ENCODE measurements at regions of chr5 and their contacts with region 1.

Region 1: GRCh38 chr5:127290019-127290945 is at the start of gene MEGF10:
- DNase-seq: peak in 2 of 5 donors; percentile 21 to 45
- ATAC-seq: peak; percentile 37 to 85 (median 75)
- H3K4me3 ChIP-seq: peak within 1 kb of the TSS in 11 of 12 donors; percentile 16 to 47 (median 41)
- H3K27ac ChIP-seq: no peak within 1 kb of the TSS
- H3K4me1 ChIP-seq: peaks cover 0 to 12% (median 3%) of the 10 kb centered on the region in 12 donors
- H3K27me3 ChIP-seq: peaks cover 0 to 57% (median 33%) of the 10 kb centered on the region in 9 donors
- CTCF ChIP-seq: peak; percentile 36 to 68 (median 60)
- POLR2A ChIP-seq: no peak
- total RNA-seq, gene MEGF10: 0.09 to 1.3 (median 0.37) TPM

Region 2: GRCh38 chr5:127042593-127042992 is 247.7 kb before region 1 on chr5:
- intact Hi-C with region 1: no loop called
- DNase-seq: no peak
- ATAC-seq: no peak
- H3K4me3 ChIP-seq: no peak overlapping the region
- H3K27ac ChIP-seq: no peak overlapping the region
- H3K4me1 ChIP-seq: peaks cover 0 to 33% (median 22%) of the 10 kb centered on the region in 12 donors
- H3K27me3 ChIP-seq: no peaks in the 10 kb centered on the region
- CTCF ChIP-seq: peak in 9 of 12 donors; percentile 9 to 40 (median 27)
- POLR2A ChIP-seq: no peak

Region 3: DNA sequence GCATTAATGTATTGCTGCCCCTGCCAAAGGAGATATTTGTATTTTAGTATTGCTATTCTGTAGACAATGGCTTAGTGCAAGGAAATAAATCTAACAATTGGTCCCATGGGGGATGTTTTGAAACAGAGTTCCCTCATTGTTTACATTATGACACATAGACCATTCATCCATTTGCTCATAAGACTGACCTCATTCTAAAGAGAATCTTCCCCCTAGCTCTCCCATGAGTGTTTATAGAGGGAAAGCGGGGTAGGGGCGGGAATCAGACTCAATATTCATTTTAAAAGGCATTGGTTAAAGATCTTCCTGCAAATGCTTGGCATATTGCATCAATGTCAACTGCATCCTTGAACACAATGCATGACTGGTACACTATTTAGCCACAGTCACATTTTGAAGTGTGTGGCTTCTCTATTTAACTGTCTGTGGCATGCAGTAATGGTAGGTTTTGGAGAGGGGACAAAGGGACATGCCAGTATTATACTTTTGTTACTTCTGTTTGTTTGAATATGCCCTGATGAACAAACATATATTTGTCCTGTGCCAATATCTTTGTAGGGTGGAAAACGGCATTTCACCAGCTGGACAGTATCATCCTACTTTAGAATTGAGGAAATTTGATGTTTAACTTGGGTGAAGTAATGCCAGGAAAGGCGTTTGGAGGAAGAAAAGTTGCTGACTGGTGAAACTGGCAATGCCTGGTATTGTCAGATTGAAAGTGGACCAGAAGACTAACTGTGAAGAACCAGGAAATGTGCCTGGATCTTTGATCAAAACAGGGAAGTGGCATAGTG is 83.8 kb before region 1 on chr5:
- intact Hi-C with region 1: no loop called
- DNase-seq: no peak
- ATAC-seq: no peak
- H3K4me3 ChIP-seq: no peak overlapping the region
- H3K27ac ChIP-seq: no peak overlapping the region
- H3K4me1 ChIP-seq: no peaks in the 10 kb centered on the region
- H3K27me3 ChIP-seq: no peaks in the 10 kb centered on the region
- CTCF ChIP-seq: no peak
- POLR2A ChIP-seq: no peak

Region 4: GRCh38 chr5:127326428-127326827 is 36.1 kb after region 1 on chr5:
- intact Hi-C with region 1: no loop called
- DNase-seq: no peak
- ATAC-seq: no peak
- H3K4me3 ChIP-seq: no peak overlapping the region
- H3K27ac ChIP-seq: no peak overlapping the region
- H3K4me1 ChIP-seq: no peaks in the 10 kb centered on the region
- H3K27me3 ChIP-seq: no peaks in the 10 kb centered on the region
- CTCF ChIP-seq: no peak
- POLR2A ChIP-seq: no peak

Region 5: DNA sequence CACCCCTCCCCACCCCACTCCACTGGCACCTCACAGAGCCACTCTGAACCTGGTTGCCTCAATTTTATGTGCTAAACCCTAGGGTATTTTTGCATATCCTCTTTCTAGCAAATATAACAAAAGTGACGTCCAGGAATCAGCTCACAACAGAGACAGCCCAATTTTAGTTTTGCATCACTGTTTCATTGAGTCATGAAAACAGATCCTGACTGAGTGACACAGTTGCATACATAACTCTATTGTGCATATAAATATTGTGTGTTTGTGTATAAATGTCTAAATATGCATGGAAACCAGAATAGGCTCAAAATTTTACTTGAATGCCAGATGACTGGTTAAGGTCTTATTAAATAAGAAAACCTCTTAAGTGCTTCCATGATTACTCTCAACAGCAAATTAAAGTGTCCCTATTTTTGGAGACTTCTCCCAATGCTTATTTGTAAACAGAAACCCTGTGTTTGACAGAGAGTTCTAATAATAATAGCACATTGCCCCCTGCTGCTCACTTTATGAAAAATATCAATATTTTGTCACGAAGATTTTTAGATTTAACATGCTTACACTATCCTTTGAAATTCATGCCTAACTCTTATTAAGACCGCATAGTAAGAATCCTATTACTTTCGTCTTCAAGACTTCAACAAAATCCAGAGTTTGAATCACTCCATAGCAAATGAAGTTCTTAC is 151.7 kb after region 1 on chr5:
- intact Hi-C with region 1: loop called in 9 of 10 experiments (anchors 2 to 10 kb)
- DNase-seq: no peak
- ATAC-seq: no peak
- H3K4me3 ChIP-seq: no peak overlapping the region
- H3K27ac ChIP-seq: no peak overlapping the region
- H3K4me1 ChIP-seq: no peaks in the 10 kb centered on the region
- H3K27me3 ChIP-seq: peaks cover 0 to 5% (median 0%) of the 10 kb centered on the region in 9 donors
- CTCF ChIP-seq: peak in 8 of 12 donors; percentile 15 to 40 (median 32)
- POLR2A ChIP-seq: no peak

Region 6: DNA sequence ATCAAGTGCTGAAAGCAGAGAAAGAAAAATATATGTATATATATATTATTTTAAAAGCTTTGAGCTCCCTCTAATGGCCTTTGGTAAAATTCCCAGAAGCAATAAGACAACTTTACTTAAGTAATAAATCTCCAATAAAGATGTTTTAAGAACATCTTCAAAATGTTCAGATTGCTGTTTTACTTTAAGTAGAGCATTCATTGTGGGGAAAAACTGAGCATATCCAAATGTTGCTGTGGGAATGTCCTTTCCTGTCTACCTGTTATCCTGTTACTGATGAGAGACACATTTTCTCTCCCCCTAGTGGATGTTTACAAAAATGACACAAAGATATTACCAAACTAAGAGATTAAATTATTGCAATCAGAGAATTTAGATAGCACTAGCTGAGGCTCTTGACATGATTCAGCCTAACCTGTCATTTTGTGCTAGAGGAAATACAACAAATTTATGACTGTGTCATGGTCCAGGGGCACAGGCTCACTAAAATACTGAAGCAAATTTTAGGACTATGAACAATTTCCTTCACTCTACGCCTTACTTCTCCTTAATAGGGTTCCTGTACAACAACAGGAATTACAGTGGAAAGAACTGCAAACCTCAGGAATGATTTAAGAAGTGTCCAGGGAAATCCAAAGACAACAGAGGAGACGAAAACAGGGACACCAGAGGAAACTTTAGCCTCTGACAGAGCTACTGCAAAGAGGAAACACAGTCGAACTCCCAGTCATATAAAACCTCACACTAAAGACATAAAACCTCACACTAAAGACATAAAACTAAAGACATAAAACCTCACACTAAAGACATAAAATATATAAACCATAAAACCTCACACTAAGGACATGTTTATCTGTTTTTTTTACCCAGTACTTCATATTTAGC is 202.8 kb after region 1 on chr5:
- intact Hi-C with region 1: loop called (anchors 1 to 5 kb)
- DNase-seq: no peak
- ATAC-seq: no peak
- H3K4me3 ChIP-seq: no peak overlapping the region
- H3K27ac ChIP-seq: no peak overlapping the region
- H3K4me1 ChIP-seq: no peaks in the 10 kb centered on the region
- H3K27me3 ChIP-seq: peaks cover 0 to 14% (median 0%) of the 10 kb centered on the region in 9 donors
- CTCF ChIP-seq: peak; percentile 54 to 77 (median 68)
- POLR2A ChIP-seq: no peak

Region 7: DNA sequence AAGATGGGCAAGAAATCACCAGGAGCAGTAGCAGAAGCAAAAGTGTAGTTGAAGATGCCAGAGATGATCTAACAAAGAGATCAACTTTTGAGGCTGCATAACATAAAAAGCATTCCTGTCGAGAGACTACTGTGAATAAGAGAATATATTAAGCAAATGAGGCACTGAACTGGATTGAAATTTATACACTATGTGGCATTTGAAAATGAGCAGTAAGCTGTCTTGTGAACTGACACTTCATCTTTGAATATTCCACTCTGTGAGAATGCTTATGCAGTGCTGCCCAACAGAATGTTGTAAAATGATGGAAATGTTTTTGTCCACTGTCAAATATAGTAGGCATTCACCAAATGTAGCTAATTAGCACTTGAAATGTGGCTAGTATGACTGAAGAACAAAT is 208.3 kb after region 1 on chr5:
- intact Hi-C with region 1: loop called in 9 of 10 experiments (anchors 1 to 5 kb)
- DNase-seq: no peak
- ATAC-seq: no peak
- H3K4me3 ChIP-seq: no peak overlapping the region
- H3K27ac ChIP-seq: no peak overlapping the region
- H3K4me1 ChIP-seq: no peaks in the 10 kb centered on the region
- H3K27me3 ChIP-seq: no peaks in the 10 kb centered on the region
- CTCF ChIP-seq: no peak
- POLR2A ChIP-seq: no peak

Measured in heart left ventricle (tissue), 16 donors.